ENCODE measurements at regions of chr16 and their contacts with region 1.

Region 1: DNA sequence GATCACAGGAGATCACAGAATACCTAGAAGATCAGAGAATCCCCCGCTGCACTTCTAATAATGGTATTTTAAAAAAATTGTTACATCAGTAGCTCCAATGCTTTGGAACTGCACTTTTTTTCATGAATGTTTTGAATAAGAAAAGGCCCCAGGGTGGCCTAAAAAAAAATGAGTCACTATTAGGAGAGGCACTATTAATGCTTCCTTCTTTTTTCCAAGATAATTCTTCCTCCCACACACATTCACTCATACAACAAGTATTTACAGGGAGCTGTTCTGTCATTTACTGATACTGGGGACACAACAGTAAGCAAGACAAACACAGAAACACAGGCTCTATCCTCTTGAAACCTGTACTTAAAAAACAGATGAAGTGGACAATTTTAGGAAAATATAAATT is 675 bp upstream of the PDZD9 start:
- DNase-seq: no peak

Region 2: DNA sequence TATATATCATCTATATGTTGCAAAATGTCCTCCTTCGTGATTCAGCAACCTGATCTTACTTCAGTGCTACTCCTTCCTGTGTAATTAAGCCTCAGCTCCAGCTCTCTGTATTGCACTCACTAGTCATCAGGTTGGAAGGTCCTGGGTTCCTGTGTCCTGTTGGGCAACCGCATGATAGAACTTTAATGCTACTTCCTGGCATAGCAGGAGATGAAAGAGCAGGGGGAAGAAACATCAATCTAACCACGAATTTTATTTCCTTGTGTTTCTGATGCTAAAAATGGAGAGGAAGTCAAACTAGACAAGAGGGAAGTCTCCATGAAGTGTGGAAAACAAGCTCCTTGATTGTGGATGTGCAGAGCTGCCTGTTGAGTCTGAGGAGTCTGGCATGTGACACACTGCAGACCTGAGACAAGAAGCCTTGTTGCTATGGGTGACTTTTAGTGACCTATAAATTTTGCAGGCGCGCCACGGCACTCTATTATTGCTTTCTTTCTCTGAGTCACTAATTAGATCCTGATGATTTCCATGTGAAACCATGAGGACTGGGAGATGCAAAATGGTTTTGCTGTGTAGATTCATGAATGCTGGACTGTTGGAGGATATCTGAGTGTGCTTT is 374.8 kb before region 1 on chr16:
- intact Hi-C with region 1: no loop called
- DNase-seq: peak in 19 of 42 donors; percentile 15 to 71 (median 41)

Region 3: GRCh38 chr16:22023505-22023904 is 21.9 kb after region 1 on chr16:
- intact Hi-C with region 1: no loop called
- DNase-seq: no peak

Region 4: GRCh38 chr16:22077700-22078313 is 76.2 kb after region 1 on chr16:
- intact Hi-C with region 1: loop called (anchors 5 kb)
- DNase-seq: peak; percentile 31 to 89 (median 71)

Region 5: DNA sequence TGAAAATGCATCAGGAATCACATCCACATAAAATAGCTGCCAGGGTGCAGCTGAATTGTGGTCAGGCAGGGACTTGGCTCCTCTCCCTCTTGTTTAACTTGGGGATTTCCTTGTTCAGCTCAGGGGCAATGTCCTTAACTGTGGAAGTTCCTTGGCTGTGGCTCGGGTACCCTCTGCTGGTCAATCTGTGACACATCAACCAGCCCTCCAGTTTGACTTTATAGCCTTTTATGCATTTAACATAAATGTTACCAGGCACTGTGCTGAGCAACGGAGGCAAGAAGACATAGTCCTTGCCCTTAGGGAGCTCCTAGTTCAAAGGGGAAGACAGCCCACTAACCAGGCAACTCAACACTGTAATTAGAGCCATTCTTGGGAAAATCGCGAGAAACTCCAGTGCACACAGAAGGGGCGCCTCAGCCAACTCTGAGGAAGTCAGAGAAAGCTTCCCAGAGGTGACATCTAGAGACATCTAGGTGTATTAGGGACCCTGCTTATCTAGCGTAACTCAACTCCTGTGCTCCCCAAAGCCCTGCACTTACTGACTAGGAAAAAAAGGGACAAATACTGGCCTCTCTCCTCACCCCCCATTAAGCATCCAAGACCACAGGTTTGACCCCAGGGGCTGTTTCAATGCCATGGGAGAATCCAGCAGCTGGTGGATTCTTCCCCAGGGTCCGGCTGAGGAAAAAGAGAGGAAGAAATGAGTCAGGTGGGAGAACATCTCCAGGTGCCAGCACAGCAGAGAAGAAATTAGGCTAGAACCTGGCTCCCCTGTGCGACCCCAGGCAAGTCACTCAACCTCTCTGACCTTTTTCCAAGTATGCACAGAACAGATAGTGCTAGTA is 187.2 kb after region 1 on chr16:
- intact Hi-C with region 1: loop called (anchors 5 kb)
- DNase-seq: peak in 41 of 42 donors; percentile 22 to 85 (median 63)

Region 6: DNA sequence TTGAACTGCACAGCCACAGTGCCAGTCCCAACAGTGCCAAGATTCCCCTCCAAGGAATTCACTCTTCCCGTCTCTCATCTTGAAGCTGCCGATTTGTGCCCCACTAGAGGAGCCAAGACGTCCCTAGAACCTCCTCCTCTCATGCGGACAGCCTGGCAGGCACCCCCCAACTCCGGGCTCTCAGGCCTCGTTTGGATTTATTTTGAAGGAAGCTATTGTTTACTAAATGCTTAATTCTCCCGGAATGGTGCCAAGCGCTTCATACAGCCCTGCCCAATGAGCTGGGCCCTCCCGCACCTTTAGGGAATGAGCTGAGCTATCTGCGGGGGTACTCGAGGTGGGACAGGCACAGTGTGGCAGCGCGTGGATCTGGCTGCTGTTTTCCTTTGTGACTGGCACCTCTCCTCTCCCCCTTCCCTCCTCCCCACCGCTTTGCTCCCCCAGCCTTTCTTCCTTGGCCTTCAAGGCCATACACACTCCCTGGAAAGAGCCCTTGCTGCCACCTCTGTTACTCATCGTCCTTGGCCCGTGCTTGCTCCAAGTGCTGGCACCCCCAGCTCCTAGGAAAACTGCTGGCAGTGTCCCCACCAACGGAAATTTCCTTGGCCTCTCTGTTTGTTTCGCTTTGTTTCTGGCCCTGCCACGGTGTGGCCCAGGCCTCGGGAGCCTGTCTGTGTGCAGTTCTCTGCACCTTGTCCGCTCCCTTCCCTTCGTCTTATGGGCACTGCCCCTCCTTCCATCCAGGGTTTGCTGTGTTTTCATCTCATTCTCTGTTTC is 422.8 kb after region 1 on chr16:
- intact Hi-C with region 1: no loop called
- DNase-seq: peak in 30 of 42 donors; percentile 16 to 82 (median 42)